Activated CD8-positive, alpha-beta T cell treated with anti-CD3 and anti-CD28 coated beads for 36 hours (primary cell): ENCODE measurements at regions of chr9 and their contacts with region 1.

Region 1: DNA sequence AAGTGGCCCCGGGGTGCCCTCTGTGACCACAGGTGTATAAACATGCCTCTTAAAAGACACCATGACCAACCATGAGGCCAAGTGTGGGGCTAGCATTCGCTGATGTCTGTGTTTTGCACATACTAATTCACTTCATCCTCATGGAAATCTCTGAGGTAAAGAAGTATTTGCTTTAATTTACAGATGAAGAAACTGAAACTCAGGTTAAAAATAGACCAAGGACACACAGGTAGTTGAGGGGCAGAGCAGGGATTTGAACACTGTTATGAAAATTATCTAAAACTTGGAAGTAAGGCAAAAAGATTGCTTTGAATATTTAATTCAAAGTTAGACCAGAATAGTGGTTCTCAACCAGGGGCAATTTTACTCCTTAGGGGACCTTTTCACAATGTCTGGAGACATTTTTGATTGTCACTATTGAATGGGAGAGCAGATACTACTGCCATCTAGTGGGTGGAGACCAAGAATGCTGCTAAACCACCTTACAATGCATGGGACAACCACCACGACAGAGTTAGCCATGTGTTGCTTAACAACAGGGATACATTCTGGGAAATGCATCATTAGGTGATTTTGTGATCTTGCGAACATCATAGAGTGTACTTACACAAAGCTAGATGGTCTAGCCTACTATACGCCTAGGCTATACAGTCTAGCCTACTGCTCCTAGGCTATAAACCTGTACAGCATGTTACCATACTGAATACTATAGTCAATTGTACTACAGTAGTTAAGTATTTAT is 8.0 kb upstream of the FXN start:
- DNase-seq: peak; percentile 50
- ATAC-seq: peak; percentile 71
- H3K4me3 Mint-ChIP-seq: no peak overlapping the region
- H3K27ac Mint-ChIP-seq: no peak overlapping the region
- H3K4me1 Mint-ChIP-seq: peaks cover 38% of the 10 kb centered on the region
- H3K27me3 Mint-ChIP-seq: no peaks in the 10 kb centered on the region
- CTCF ChIP-seq: peak; percentile 85

Region 2: GRCh38 chr9:68584189-68585033 is 443.1 kb before region 1 on chr9:
- CTCF ChIA-PET with region 1: no interaction called
- POLR2A ChIA-PET with region 1: no interaction called
- intact Hi-C with region 1: loop called (anchors 10 kb)
- DNase-seq: peak; percentile 82
- ATAC-seq: peak; percentile 94
- H3K4me3 Mint-ChIP-seq: no peak overlapping the region
- H3K27ac Mint-ChIP-seq: no peak overlapping the region
- H3K4me1 Mint-ChIP-seq: peaks cover 2% of the 10 kb centered on the region
- H3K27me3 Mint-ChIP-seq: peaks cover 16% of the 10 kb centered on the region
- CTCF ChIP-seq: peak; percentile 84

Region 3: DNA sequence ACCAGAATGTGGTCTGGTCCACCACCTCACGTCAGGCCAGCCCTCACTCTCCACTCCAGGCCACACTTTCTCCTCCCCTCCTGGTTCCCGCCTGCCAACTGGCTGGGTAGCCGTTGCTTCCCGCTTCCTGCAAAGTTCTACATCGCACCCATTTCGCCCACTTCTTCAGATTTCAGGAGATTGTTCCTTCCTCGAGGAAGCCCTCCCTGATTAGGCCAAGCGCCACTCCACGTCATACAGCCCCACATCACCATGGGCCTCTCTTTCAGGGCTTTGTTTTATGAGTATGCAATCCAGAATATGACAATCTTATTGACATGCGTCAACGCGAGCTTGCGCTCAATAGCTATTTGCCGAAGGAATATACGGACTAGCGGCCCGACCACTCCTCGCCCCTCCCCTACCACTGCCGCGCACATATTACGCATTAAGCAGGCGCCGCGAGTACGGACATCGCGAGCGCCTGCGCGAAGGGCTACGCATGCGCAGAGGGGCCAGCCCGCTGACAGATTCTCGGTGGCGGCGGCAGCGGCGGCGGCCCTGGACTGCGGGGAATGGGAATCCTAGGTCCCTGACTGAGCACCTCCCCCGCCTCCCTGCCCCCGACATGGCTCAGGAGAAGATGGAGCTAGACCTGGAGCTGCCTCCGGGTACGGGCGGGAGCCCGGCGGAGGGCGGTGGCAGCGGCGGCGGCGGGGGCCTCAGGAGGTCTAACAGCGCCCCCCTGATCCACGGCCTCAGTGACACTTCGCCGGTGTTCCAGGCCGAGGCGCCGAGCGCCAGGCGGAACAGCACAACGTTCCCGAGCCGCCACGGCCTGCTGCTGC is 247.8 kb before region 1 on chr9:
- CTCF ChIA-PET with region 1: no interaction called
- POLR2A ChIA-PET with region 1: no interaction called
- intact Hi-C with region 1: loop called (anchors 10 kb)
- DNase-seq: peak; percentile 95
- ATAC-seq: peak; percentile 95
- H3K4me3 Mint-ChIP-seq: no peak overlapping the region
- H3K27ac Mint-ChIP-seq: no peak overlapping the region
- H3K4me1 Mint-ChIP-seq: peaks cover 12% of the 10 kb centered on the region
- H3K27me3 Mint-ChIP-seq: peaks cover 2% of the 10 kb centered on the region
- CTCF ChIP-seq: no peak

Region 4: GRCh38 chr9:68895741-68896478 is 131.6 kb before region 1 on chr9:
- CTCF ChIA-PET with region 1: no interaction called
- POLR2A ChIA-PET with region 1: no interaction called
- intact Hi-C with region 1: no loop called
- DNase-seq: no peak
- ATAC-seq: peak; percentile 81
- H3K4me3 Mint-ChIP-seq: peak overlapping the region; percentile 46
- H3K27ac Mint-ChIP-seq: peak overlapping the region; percentile 85
- H3K4me1 Mint-ChIP-seq: peaks cover 26% of the 10 kb centered on the region
- H3K27me3 Mint-ChIP-seq: no peaks in the 10 kb centered on the region
- CTCF ChIP-seq: no peak

Region 5: DNA sequence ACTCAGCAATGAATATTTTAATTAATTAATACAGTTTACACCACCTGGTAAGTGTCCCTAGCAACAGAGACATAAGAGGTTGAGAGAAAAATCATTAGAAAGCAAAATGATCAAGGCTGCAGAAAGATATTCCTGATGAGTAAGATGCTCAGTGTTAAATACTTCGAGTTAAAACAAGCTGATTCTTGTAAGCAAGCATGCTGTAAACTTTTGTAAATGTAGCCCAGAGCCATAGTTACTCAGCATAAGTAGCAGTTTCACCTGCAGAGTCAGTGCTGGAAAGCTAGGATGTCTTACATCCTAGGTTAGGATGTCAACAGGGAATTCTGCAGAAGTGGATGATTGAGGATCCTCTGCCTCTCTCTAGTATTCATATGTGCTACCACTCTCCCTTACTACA is 17.8 kb before region 1 on chr9:
- CTCF ChIA-PET with region 1: interaction called, 10 read pairs
- POLR2A ChIA-PET with region 1: no interaction called
- intact Hi-C with region 1: no loop called
- DNase-seq: no peak
- ATAC-seq: no peak
- H3K4me3 Mint-ChIP-seq: no peak overlapping the region
- H3K27ac Mint-ChIP-seq: no peak overlapping the region
- H3K4me1 Mint-ChIP-seq: peaks cover 9% of the 10 kb centered on the region
- H3K27me3 Mint-ChIP-seq: peaks cover 15% of the 10 kb centered on the region
- CTCF ChIP-seq: no peak